Activated CD8-positive, alpha-beta T cell treated with anti-CD3 and anti-CD28 coated beads, Interleukin-2, amount 10 ng/mL, durations not matched to agents 7 days and 5 days (primary cell): ENCODE measurements at regions of chr6 and their contacts with region 1.

Region 1: GRCh38 chr6:56851541-56852259 is 103.2 kb upstream of the BEND6 start:
- DNase-seq: peak; percentile 64
- ATAC-seq: peak; percentile 93
- H3K4me3 Mint-ChIP-seq: peak overlapping the region; percentile 69
- H3K27ac Mint-ChIP-seq: peak overlapping the region; percentile 23
- H3K4me1 Mint-ChIP-seq: peaks cover 19% of the 10 kb centered on the region
- H3K27me3 Mint-ChIP-seq: peaks cover 43% of the 10 kb centered on the region

Region 2: DNA sequence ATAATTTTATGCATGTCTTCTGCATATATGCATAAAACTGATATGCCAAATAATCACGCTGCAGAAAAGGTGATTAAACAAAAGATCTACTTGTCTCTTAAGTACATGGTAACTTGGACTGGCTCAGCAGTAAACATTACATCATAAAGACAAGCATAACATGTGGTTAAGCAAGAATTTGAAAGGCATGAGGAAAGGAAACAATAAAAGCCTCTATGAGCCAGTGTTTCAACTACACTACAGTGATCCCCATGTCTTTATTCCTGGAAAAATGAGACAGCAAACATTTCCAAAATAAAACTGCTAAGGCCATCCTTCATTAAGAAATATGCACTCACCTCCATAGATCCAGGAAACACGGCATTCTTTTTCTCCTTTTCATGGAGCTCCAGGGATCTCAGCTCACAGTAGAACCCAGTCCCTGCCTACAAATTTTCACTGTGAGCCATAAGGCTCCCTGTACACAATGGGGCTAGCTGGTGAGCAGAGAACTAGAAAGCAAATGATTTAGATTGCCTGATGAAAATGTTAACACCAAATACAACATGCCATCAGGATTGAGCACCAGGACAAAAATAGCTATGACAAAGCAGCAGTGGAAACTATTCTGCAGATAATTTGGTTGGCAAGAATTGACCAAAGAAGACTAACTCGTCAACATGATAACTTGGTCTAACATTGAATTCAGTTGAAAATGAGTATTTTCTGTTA is 760.4 kb before region 1 on chr6:
- CTCF ChIA-PET with region 1: no interaction called
- POLR2A ChIA-PET with region 1: no interaction called
- DNase-seq: no peak
- ATAC-seq: no peak
- H3K4me3 Mint-ChIP-seq: no peak overlapping the region
- H3K27ac Mint-ChIP-seq: no peak overlapping the region
- H3K4me1 Mint-ChIP-seq: no peaks in the 10 kb centered on the region
- H3K27me3 Mint-ChIP-seq: no peaks in the 10 kb centered on the region

Region 3: GRCh38 chr6:56595490-56596122 is 256.1 kb before region 1 on chr6:
- CTCF ChIA-PET with region 1: interaction called, 12 read pairs
- POLR2A ChIA-PET with region 1: no interaction called
- DNase-seq: peak; percentile 50
- ATAC-seq: peak; percentile 85
- H3K4me3 Mint-ChIP-seq: no peak overlapping the region
- H3K27ac Mint-ChIP-seq: no peak overlapping the region
- H3K4me1 Mint-ChIP-seq: peaks cover 12% of the 10 kb centered on the region
- H3K27me3 Mint-ChIP-seq: peaks cover 6% of the 10 kb centered on the region

Region 4: DNA sequence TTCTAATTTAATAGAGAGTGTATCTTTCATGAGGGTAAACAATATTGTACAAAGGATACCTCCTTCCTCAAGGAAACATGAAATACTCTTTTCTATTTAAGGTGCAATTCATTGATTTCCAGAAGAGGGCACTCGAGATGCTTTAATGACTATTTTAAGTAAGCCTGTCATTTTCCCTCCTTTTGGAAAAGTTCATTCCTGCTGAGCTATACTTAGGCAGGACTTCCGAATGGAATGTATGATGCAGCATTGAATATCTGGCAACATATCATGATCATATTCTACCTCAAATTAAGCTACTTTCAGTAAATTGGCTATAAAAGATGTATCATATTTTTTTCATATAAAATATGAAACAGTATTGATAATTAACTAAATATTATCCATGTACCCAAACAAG is 214.1 kb before region 1 on chr6:
- CTCF ChIA-PET with region 1: interaction called, 18 read pairs
- POLR2A ChIA-PET with region 1: no interaction called
- DNase-seq: no peak
- ATAC-seq: no peak
- H3K4me3 Mint-ChIP-seq: no peak overlapping the region
- H3K27ac Mint-ChIP-seq: no peak overlapping the region
- H3K4me1 Mint-ChIP-seq: no peaks in the 10 kb centered on the region
- H3K27me3 Mint-ChIP-seq: peaks cover 3% of the 10 kb centered on the region

Region 5: GRCh38 chr6:56708810-56709597 is 142.7 kb before region 1 on chr6:
- CTCF ChIA-PET with region 1: interaction called, 15 read pairs
- POLR2A ChIA-PET with region 1: no interaction called
- DNase-seq: no peak
- ATAC-seq: no peak
- H3K4me3 Mint-ChIP-seq: no peak overlapping the region
- H3K27ac Mint-ChIP-seq: no peak overlapping the region
- H3K4me1 Mint-ChIP-seq: no peaks in the 10 kb centered on the region
- H3K27me3 Mint-ChIP-seq: peaks cover 4% of the 10 kb centered on the region

Region 6: DNA sequence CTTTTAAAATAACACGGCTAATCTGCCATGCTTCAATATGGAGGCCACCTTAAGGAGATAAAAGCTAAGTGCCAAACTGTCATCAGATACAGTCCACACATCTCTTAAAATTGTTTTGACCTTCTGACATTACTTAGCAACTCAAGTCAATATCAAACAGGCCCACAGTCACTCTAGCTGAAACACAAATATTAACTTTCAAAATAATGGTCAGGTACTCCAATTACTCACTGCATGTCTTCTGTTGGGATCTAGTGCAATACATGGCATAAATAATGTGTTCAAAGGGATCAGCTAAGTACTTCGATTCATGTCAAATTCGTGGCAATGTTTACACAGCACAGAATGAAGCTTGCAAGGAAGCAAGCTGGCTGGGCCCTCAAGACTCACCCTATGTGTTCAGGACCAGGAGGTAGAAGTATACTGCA is 30.7 kb before region 1 on chr6:
- CTCF ChIA-PET with region 1: interaction called, 10 read pairs
- POLR2A ChIA-PET with region 1: no interaction called
- DNase-seq: no peak
- ATAC-seq: no peak
- H3K4me3 Mint-ChIP-seq: no peak overlapping the region
- H3K27ac Mint-ChIP-seq: no peak overlapping the region
- H3K4me1 Mint-ChIP-seq: no peaks in the 10 kb centered on the region
- H3K27me3 Mint-ChIP-seq: peaks cover 8% of the 10 kb centered on the region

Region 7: DNA sequence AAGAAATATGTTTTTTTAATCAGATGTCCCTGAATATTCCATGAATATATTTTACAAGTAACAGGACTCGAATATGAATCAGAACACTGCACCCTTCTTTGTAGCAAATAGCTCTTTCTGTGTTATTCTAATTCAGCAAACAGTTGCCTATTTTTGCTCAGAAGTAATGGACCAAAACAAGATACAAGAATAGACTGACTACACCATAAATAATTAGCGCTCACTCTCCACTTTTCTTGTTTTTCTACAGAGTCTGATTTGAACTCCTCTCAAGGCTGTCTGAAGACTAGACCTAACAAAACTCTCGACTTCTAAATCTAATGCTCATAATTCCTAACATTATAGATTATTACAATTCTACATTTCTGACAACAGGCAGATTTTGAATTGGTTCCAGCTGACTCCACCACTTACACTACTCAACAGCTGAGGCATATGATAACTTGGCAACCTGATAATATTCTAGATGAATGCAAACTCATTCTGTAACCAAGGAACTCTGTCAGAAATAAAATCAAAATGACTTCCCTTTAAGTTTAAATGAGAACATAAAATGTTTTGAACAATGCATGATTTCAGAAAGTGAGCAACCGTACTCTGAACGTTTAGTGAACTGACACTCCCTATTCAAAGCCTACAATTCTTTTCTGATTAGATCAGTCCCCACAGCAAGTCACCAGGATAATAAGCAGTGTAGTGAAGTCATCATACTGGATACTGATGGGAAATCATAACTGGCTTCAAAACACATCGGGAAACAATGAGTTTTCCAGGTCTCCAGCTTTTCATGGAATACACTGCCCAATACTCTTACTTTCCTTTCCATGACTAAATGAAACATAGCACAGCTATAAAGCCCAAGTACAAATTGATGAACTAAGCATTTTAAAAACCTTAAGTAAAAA is 11.0 kb before region 1 on chr6:
- CTCF ChIA-PET with region 1: interaction called, 16 read pairs
- POLR2A ChIA-PET with region 1: no interaction called
- DNase-seq: no peak
- ATAC-seq: no peak
- H3K4me3 Mint-ChIP-seq: no peak overlapping the region
- H3K27ac Mint-ChIP-seq: no peak overlapping the region
- H3K4me1 Mint-ChIP-seq: peaks cover 4% of the 10 kb centered on the region
- H3K27me3 Mint-ChIP-seq: peaks cover 60% of the 10 kb centered on the region

Region 8: DNA sequence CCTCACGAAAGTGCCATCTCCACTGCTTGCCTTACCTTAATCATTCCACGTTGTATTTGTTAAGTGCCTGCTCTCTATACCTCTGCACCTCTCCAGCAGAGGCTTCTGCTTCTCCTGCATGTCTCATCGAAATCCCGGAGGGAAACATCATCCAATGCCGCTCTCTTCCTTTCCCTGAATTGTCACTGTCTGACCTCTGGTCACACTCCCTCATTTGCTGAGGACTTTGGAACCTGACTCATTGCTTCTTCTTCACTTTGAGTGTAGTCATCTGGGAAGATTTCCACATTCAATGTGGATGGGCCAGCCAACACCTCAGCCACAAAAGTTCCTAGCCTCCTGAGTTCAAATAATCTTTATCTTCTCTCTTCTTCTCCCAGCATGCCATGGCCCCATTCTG is 24.3 kb after region 1 on chr6:
- CTCF ChIA-PET with region 1: no interaction called
- POLR2A ChIA-PET with region 1: no interaction called
- DNase-seq: no peak
- ATAC-seq: no peak
- H3K4me3 Mint-ChIP-seq: no peak overlapping the region
- H3K27ac Mint-ChIP-seq: no peak overlapping the region
- H3K4me1 Mint-ChIP-seq: no peaks in the 10 kb centered on the region
- H3K27me3 Mint-ChIP-seq: peaks cover 6% of the 10 kb centered on the region